ENCODE measurements at regions of chr22 and their contacts with region 1.

Region 1: DNA sequence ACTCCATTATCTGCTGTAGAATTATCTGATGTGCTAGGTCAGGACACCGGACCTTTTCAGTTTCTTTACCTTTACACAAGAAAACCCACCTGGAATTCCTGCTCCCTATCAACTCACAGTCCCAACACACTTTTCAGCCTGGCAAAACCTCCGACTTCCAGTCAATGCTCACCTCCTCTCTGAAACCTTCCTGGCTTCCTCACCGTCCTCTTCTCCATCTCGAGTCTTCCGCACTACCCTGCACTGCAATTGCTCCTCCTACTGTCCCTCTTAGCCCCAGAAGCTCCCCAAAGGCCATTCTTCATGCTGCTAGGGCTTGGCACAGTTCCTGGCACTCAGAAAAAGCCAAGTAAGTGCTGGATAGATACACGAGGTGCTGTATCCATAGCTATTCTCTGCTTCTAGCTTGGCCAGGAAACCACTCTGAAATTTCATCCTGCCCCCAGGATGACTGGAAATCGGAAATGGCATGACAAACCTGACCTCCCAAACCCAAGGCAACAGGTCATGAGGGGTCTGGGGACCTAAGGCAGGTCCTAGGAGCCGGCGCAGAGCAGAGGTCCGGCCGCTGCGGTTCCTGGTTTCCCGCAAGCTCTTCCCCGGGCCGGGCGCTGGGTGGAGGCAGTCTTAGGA is 702 bp downstream of the SYN3 start:
- H3K4me3 ChIP-seq: peak overlapping the region; percentile 38
- H3K27ac ChIP-seq: no peak overlapping the region
- H3K4me1 ChIP-seq: peaks cover 2% of the 10 kb centered on the region; the same call in 1 of the 2 replicates
- CTCF ChIP-seq: no peak

Region 2: GRCh38 chr22:33038131-33038772 is 19.2 kb before region 1 on chr22:
- CTCF ChIA-PET with region 1: interaction called, 16 read pairs
- POLR2A ChIA-PET with region 1: no interaction called
- H3K4me3 ChIP-seq: no peak overlapping the region
- H3K27ac ChIP-seq: no peak overlapping the region
- H3K4me1 ChIP-seq: no peaks in the 10 kb centered on the region
- CTCF ChIP-seq: no peak

Region 3: GRCh38 chr22:33076343-33076742 is 18.9 kb after region 1 on chr22:
- CTCF ChIA-PET with region 1: interaction called, 10 read pairs
- POLR2A ChIA-PET with region 1: interaction called, 3 read pairs
- H3K4me3 ChIP-seq: no peak overlapping the region
- H3K27ac ChIP-seq: no peak overlapping the region
- H3K4me1 ChIP-seq: no peaks in the 10 kb centered on the region
- CTCF ChIP-seq: no peak

Measured in HEK293 (cell line).